Activated B cell treated with CpG ODN at 0.5 μM for 24 hours (primary cell): ENCODE measurements at regions of chr16 and their contacts with region 1.

Region 1: GRCh38 chr16:24036614-24037013 is 200.8 kb downstream of the PRKCB start:
- DNase-seq: no peak
- ATAC-seq: peak; percentile 55
- H3K4me3 Mint-ChIP-seq: peak overlapping the region; percentile 15
- H3K27ac Mint-ChIP-seq: peak overlapping the region; percentile 70
- H3K4me1 Mint-ChIP-seq: peaks cover 48% of the 10 kb centered on the region
- H3K27me3 Mint-ChIP-seq: no peaks in the 10 kb centered on the region
- CTCF ChIP-seq: no peak

Region 2: DNA sequence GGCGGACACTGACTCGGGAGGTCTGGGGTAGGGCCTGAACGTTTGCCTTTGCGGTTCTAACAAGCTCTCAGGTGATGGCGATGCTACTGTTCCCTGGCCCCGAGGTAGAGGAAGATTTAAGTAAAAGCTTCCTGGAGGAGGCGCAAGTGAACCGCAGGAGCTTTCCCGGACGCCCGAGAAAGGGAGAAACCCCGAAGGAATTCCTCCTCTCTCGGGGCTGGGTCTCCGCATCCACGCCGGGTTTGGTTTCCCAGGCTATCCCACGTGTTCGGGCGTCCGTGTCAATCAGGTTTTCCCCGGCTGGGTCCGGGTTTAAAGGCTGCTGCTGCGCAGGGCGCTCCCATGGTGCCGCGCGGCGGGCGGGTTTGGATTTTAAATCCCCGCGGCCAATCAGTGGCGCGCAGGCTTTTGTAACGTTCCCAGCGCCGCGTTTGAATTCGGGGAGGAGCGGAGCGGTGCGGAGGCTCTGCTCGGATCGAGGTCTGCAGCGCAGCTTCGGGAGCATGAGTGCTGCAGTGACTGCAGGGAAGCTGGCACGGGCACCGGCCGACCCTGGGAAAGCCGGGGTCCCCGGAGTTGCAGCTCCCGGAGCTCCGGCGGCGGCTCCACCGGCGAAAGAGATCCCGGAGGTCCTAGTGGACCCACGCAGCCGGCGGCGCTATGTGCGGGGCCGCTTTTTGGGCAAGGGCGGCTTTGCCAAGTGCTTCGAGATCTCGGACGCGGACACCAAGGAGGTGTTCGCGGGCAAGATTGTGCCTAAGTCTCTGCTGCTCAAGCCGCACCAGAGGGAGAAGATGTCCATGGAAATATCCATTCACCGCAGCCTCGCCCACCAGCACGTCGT is 358.0 kb before region 1 on chr16 and contains the start of gene PLK1:
- CTCF ChIA-PET with region 1: no interaction called
- POLR2A ChIA-PET with region 1: no interaction called
- intact Hi-C with region 1: loop called (anchors 1 kb)
- DNase-seq: peak; percentile 54
- ATAC-seq: peak; percentile 93
- H3K4me3 Mint-ChIP-seq: peak within 1 kb of the TSS; percentile 85
- H3K27ac Mint-ChIP-seq: no peak within 1 kb of the TSS
- H3K4me1 Mint-ChIP-seq: peaks cover 17% of the 10 kb centered on the region
- H3K27me3 Mint-ChIP-seq: no peaks in the 10 kb centered on the region
- CTCF ChIP-seq: no peak
- total RNA-seq, gene PLK1: 2.3 and 3.9 TPM in 2 replicates

Region 3: DNA sequence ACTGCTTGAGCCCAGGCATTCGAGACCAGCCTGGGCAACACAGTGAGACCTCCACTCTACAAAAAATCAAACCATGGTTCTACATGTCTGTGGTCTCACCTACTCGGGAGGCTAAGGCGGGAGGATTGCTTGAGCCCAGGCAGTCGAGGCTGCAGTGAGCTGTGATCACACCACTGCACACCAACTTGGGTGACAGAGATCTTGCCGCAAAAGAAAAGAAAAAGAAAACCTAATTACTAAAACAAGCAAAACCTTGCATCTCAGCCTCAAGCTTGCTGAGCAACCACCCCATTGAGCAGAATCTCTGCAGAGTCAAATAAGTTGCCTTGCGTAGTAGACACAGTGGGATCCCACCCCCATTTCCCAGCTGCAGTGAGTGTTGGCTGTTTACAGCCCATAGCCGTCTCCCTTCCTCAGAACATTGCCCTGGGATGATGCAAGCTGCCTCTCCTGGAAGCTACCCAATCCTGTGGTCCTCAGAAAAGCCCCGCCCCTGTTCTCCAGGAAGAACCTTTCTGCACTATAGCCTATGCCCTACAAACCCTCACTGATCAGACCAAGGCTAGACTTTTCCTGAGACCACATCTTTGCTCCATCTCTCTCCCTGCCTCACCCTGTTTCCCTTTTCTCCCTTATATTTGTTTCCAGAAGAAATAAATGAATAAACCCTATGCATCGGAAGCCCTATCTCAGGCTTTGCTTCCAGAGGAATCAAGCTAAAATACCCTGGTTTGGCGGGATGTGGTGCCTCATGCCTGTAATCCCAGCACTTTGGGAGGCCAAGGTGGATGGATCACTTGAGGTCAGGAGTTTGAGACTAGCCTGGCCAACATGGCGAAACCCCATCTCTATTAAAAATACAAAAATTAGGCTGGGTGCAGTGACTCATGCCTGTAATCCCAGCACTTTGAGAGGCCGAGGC is 306.9 kb before region 1 on chr16:
- CTCF ChIA-PET with region 1: interaction called, 18 read pairs
- POLR2A ChIA-PET with region 1: no interaction called
- intact Hi-C with region 1: no loop called
- DNase-seq: no peak
- ATAC-seq: no peak
- H3K4me3 Mint-ChIP-seq: no peak overlapping the region
- H3K27ac Mint-ChIP-seq: no peak overlapping the region
- H3K4me1 Mint-ChIP-seq: peaks cover 3% of the 10 kb centered on the region
- H3K27me3 Mint-ChIP-seq: peaks cover 11% of the 10 kb centered on the region
- CTCF ChIP-seq: no peak

Region 4: GRCh38 chr16:24015923-24016322 is 20.7 kb before region 1 on chr16:
- CTCF ChIA-PET with region 1: interaction called, 36 read pairs
- POLR2A ChIA-PET with region 1: interaction called, 4 read pairs
- intact Hi-C with region 1: loop called (anchors 1 kb)
- DNase-seq: no peak
- ATAC-seq: no peak
- H3K4me3 Mint-ChIP-seq: no peak overlapping the region
- H3K27ac Mint-ChIP-seq: peak overlapping the region; percentile 92
- H3K4me1 Mint-ChIP-seq: peaks cover 92% of the 10 kb centered on the region
- H3K27me3 Mint-ChIP-seq: no peaks in the 10 kb centered on the region
- CTCF ChIP-seq: no peak